ENCODE measurements at regions of chr5 and their contacts with region 1.

Region 1: DNA sequence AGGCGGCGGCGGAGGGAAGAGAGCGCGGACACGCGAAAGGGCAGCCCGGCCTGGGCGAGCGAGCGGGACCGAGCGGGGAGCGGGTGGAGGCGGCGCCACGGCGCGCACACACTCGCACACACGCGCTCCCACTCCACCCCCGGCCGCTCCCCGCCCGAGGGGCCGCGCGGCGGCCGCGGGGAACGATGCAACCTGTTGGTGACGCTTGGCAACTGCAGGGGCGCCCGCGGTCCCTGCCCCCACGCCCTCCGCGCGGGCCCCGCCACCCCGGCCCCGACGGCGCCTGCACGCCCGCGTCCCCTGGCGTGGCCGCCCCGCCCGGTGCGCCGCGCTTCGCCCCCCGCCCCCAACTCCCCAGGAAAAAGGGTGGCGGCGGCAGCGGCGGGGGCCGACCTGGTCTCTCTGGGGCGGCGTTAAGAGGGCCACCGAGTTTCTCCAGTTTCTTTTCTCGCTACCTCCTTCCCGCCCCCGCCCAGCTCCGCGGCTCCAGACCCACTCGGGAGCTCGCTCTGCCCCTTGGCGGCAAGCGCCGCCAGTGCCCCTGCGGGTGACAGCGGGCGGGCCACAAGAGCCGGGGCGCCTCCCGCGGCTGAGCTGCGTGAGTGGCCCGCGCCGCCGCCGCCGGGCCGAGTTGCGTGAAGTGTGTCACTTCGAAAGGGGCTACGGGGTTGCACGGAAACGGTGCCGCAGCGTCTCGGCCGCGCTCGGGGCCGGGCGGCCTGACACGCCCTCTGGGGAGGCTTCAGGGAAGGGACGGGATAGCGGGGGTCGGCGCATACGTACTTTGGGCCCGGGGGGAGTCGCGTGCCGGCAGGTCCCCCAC is at the start of gene NR3C1:
- DNase-seq: peak; percentile 84
- H3K4me3 Mint-ChIP-seq: peak within 1 kb of the TSS; percentile 82
- H3K27ac Mint-ChIP-seq: peak within 1 kb of the TSS; percentile 99
- H3K4me1 Mint-ChIP-seq: peaks cover 38% of the 10 kb centered on the region
- H3K27me3 Mint-ChIP-seq: no peaks in the 10 kb centered on the region
- total RNA-seq, gene NR3C1: 41.8 to 42.9 TPM

Region 2: GRCh38 chr5:142922223-142922952 is 481.4 kb before region 1 on chr5:
- CTCF ChIA-PET with region 1: no interaction called
- intact Hi-C with region 1: loop called (anchors 2 kb)
- DNase-seq: no peak
- H3K4me3 Mint-ChIP-seq: no peak overlapping the region
- H3K27ac Mint-ChIP-seq: no peak overlapping the region
- H3K4me1 Mint-ChIP-seq: peaks cover 13% of the 10 kb centered on the region
- H3K27me3 Mint-ChIP-seq: no peaks in the 10 kb centered on the region

Region 3: DNA sequence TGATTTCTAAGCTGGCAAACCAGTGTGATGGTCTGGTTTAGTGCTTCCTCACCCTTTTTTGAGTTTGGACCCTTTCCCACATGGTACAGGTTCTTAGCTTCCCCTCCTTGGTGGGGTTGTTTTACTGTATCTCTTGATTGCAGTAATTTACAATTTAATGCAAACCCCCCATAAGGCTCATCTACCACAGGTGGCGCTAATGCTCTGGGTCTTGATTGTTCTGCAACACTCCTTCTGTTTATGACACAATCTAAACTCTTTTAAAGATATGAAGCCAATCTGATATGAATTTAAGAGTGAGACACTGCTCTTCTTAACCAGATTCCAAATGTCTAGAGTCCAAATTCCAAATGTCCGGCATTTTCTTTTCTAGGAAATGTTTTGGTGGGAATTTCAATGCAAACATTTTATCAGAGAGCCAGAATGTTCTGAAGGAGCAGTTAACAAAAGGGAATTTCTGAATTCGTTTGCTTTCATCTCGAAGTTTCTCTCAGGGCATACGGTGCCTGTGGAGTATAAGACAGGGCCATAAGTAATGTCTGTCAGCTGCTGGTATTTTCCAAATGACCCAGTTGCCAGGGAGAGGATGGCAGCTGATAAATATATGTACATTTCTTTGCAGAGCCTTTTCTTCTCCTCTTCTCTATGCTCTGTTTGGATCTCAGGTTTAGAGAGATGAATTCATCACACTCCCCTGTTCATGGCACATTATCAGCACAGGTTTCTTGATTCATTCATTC is 386.9 kb before region 1 on chr5:
- CTCF ChIA-PET with region 1: interaction called, 7 read pairs
- intact Hi-C with region 1: loop called (anchors 1 kb)
- DNase-seq: peak; percentile 77
- H3K4me3 Mint-ChIP-seq: no peak overlapping the region
- H3K27ac Mint-ChIP-seq: no peak overlapping the region
- H3K4me1 Mint-ChIP-seq: peaks cover 15% of the 10 kb centered on the region
- H3K27me3 Mint-ChIP-seq: no peaks in the 10 kb centered on the region

Region 4: DNA sequence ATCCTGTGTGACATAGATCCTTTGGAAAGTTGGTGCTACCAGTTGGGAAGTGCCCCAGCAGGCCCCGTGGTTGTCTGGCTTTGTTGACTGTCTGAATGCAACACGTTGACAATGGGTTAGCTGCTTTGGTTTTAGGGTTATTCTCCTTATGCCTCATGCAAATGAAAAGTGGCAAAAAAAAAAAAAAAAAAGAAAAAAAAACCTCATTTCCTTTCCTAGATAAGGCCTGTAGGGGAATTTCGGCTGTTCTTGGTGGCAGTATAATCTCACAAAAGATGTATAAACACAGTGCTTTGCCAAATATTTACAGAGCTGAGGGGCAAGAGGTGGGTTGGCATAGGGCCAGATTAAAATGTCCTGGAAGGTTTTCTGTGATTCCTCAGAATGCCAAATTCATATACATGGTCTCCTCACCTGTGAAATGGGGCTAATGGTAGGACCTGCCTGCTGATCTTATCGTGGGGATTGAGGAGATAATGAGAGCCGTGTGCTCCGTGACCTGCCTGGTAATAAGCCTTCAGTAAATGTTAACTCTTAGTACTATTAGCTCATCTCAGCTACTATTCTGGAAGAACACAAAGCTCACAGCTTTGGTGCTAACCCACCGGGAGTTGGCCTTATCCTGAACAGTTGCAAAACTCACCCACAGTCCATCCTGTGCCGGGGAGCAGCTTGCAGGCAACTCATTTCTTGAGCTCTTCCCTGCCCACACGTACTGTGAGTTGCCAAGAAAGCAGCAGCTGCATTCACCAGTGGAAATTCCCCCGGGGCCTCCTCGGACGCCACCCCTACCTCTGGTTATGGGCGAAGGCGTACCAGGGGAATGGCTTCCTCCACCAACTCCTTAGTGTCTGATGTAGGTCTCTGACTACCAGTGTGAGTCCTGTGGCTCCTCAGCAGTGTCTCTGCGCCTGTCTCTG is 220.6 kb before region 1 on chr5:
- CTCF ChIA-PET with region 1: interaction called, 4 read pairs
- intact Hi-C with region 1: loop called (anchors 2 kb)
- DNase-seq: peak; percentile 73
- H3K4me3 Mint-ChIP-seq: no peak overlapping the region
- H3K27ac Mint-ChIP-seq: peak overlapping the region; percentile 68
- H3K4me1 Mint-ChIP-seq: peaks cover 29% of the 10 kb centered on the region
- H3K27me3 Mint-ChIP-seq: no peaks in the 10 kb centered on the region

Region 5: GRCh38 chr5:143341807-143342570 is 61.8 kb before region 1 on chr5:
- CTCF ChIA-PET with region 1: interaction called, 3 read pairs
- intact Hi-C with region 1: loop called (anchors 1 kb)
- DNase-seq: peak; percentile 21
- H3K4me3 Mint-ChIP-seq: peak overlapping the region; percentile 6
- H3K27ac Mint-ChIP-seq: peak overlapping the region; percentile 72
- H3K4me1 Mint-ChIP-seq: peaks cover 51% of the 10 kb centered on the region
- H3K27me3 Mint-ChIP-seq: no peaks in the 10 kb centered on the region

Region 6: DNA sequence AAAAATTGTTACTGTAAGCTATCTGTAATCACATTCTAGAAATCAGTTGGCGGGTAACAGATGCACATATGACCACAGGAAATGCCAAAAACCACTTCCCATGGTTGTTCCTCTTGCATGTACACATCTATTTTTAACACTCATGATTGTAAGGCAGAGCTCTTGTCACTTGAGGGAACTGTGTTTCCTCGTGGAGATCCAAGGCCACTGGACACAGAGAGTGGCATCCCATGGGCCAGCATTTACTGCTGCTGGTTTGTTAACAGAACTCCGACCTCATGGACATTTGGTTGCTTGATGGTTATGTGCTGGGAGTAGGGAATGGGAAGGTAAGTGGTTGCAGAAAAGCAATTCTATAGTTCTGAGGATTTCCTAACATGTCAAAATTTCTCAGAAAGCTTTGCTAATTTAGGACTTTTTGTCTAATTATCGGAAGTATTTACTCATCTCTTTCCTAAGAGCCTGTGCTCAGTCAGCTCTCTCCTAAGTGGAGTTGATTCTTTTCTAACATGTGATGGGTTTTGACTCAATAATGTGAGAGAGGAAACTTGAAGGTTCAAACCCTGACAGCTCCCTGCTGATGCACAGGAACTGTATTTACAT is 201.7 kb after region 1 on chr5:
- CTCF ChIA-PET with region 1: interaction called, 3 read pairs
- intact Hi-C with region 1: loop called (anchors 1 kb)
- DNase-seq: peak; percentile 57
- H3K4me3 Mint-ChIP-seq: no peak overlapping the region
- H3K27ac Mint-ChIP-seq: peak overlapping the region; percentile 36
- H3K4me1 Mint-ChIP-seq: peaks cover 20% of the 10 kb centered on the region
- H3K27me3 Mint-ChIP-seq: peaks cover 19% of the 10 kb centered on the region

Region 7: DNA sequence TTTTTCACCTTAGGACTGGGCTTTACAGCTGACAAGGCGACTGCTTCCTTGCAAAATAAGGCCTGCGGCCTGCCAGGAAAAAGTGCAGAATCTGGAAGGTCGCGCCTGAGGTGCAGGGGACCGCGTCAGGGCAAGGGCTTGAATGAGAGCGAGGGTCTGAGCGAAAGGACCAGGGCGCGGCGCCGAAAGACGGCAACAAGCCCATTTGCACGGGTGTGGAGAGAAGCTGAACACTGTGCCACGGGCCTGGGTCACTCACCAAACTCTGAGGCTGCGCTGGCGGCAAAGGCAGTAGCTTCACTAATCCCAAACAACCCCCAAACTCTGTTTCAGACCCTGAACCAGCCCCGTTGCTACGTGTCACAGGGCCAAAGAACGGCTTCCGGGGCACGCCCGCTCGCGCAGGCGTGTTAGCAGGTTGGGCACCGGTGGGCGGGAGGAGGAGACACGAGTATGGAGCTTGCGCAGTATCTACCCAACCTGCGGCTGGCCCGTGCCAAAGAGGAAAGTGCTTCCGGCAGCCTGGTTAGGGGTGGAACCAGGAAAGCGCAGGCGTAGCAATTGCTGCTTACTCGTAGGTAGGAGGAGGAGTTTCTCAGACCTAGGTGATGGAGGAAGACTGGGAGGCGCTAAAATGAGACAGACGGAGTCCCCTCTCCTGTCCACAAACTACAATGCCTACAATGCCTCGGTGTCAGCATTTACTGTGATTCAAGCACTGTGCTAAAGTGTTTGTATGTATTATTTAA is 766.6 kb after region 1 on chr5 and contains the starts of genes KCTD16 and YIPF5:
- CTCF ChIA-PET with region 1: no interaction called
- intact Hi-C with region 1: loop called (anchors 1 kb)
- DNase-seq: peak; percentile 98
- H3K4me3 Mint-ChIP-seq: peak within 1 kb of the TSS; percentile 91
- H3K27ac Mint-ChIP-seq: peak within 1 kb of the TSS; percentile 60
- H3K4me1 Mint-ChIP-seq: peaks cover 39% of the 10 kb centered on the region
- H3K27me3 Mint-ChIP-seq: no peaks in the 10 kb centered on the region
- total RNA-seq, gene KCTD16: 0.27 to 0.29 TPM
- total RNA-seq, gene YIPF5: 31.2 to 33.3 TPM